ENCODE measurements at regions of chr5 and their contacts with region 1.

Region 1: GRCh38 chr5:10701567-10702039 is 59.4 kb downstream of the DAP start:
- DNase-seq: peak in 1 of 2 experiments; percentile 73
- H3K4me3 ChIP-seq: no peak overlapping the region
- H3K27ac ChIP-seq: no peak overlapping the region
- H3K4me1 ChIP-seq: peaks cover 4 to 17% (median 8%) of the 10 kb centered on the region in 4 experiments
- H3K27me3 ChIP-seq: no peaks in the 10 kb centered on the region
- CTCF ChIP-seq: peak; percentile 48 to 67 (median 55)
- EP300 ChIP-seq: no peak
- POLR2A ChIP-seq: no peak
- RAD21 ChIP-seq: peak; percentile 55 to 56

Region 2: DNA sequence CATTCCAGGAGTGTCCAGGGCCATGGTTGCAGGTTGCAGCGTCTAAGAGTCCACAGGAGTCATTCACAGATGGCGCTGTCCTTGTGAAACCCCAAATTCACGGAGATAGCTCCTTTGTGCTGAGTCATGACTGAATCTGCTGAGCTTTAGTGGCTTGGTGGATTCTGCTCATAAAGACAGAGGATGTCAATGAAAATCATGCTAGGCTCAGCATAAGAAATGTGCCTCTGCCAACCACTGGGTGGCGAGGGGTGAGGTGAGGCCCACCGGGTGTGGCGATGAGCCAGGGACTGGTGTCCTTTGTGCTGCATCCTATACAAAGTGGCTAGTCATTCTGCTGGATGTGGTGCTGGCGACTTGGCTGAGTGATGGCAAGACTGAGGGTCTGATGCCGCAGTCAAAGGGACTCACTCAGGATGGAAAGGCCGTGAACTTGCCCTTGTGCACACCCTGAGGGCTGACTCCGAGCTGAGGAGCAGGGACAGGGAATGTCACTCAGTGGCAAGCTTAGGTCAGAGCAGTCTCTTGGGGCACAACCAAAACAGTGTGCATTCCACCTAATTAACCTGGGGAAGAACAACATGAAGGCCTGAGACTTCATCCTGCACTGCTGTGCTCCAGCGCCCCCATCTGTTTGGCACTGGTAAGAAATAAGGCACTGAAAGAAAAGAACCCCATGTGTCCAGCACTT is 12.1 kb before region 1 on chr5:
- CTCF ChIA-PET with region 1: interaction called, 45 read pairs
- POLR2A ChIA-PET with region 1: interaction called, 6 read pairs
- DNase-seq: peak in 1 of 2 experiments; percentile 87
- H3K4me3 ChIP-seq: no peak overlapping the region
- H3K27ac ChIP-seq: peak overlapping the region; percentile 32; the same call in 1 of the 2 replicates
- H3K4me1 ChIP-seq: peaks cover 0 to 14% (median 5%) of the 10 kb centered on the region in 4 experiments; a peak in 6 of 7 replicates
- H3K27me3 ChIP-seq: no peaks in the 10 kb centered on the region
- CTCF ChIP-seq: peak; percentile 73 to 91 (median 83)
- EP300 ChIP-seq: no peak
- POLR2A ChIP-seq: no peak
- RAD21 ChIP-seq: peak; percentile 90 to 93

Region 3: DNA sequence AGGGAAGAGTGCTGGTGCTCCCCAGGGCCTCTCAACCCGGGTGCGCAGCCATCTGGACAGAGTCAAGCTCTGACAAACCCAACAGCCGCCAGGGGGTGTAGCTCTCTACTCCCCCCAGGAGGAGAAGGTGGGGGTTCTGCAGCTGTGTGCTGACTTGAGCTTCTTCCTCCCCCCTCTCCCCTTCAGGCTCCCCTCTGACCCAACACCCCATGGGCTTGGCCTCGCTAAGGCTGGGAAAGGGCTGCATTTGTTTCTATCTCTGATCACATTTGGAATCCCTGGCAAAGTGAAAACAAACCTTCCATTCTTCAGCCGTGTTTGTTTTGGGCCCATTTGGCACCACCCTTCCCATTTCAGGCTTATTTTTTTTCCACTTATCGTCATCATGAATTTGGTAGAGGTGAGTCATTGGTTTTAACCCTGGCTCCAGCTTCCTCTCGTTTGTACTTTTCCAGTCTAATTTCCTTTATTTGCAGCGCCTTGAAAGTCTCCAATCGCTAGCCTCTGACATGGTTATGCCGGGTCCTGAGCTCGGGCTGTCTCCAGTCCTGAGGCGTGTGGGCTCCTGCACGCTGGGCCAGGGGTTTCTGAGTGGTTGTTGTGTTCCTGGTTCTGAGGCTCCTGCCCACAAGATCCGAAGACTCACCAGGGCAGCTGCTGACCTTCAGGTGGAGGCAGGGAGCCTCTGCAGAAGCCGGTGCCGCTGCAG is 23.4 kb after region 1 on chr5:
- CTCF ChIA-PET with region 1: interaction called, 38 read pairs
- POLR2A ChIA-PET with region 1: no interaction called
- DNase-seq: no peak
- H3K4me3 ChIP-seq: no peak overlapping the region
- H3K27ac ChIP-seq: no peak overlapping the region
- H3K4me1 ChIP-seq: no peaks in the 10 kb centered on the region
- H3K27me3 ChIP-seq: no peaks in the 10 kb centered on the region
- CTCF ChIP-seq: peak in 1 of 3 experiments; percentile 6; a peak in 2 of 4 replicates
- EP300 ChIP-seq: no peak
- POLR2A ChIP-seq: no peak
- RAD21 ChIP-seq: no peak

Region 4: GRCh38 chr5:10775646-10776045 is 74.0 kb after region 1 on chr5:
- CTCF ChIA-PET with region 1: interaction called, 23 read pairs
- POLR2A ChIA-PET with region 1: no interaction called
- DNase-seq: no peak
- H3K4me3 ChIP-seq: no peak overlapping the region
- H3K27ac ChIP-seq: no peak overlapping the region
- H3K4me1 ChIP-seq: no peaks in the 10 kb centered on the region
- H3K27me3 ChIP-seq: no peaks in the 10 kb centered on the region; a peak in 1 of 7 replicates
- CTCF ChIP-seq: peak; percentile 47 to 51 (median 49)
- EP300 ChIP-seq: no peak
- POLR2A ChIP-seq: no peak
- RAD21 ChIP-seq: peak in 1 of 2 experiments; percentile 51; a peak in 2 of 4 replicates

Region 5: DNA sequence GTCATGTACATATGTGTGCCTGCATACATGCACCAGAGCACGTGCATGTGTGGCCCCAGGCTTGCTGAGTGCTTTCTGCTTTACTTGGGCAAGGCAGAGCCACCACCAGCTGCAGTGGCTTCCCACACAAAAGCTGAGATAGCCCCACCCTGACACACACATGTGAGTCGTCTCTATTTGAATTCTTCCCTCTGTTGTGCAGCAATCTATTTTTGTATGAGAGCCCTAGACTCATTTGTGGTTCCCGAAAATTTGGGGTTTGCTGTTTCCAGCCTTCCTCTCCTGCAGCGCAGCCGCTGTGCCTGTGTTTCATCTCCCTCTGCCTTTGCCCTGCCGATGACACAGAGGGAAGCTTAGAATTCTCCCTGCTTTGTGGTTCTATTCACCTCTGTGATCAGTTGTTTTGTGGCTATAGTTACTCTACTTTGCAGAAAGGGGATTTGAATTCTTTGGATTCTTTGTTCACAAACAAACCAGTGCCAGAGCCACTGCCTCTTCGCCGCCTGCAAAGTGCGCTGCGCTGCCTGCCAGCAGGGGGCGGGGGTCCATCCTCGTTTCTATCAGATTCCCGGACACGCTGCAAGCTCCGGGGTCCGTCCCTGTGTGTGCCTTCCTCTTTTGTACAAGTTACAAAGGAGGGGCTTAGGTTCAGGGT is 155.2 kb after region 1 on chr5:
- CTCF ChIA-PET with region 1: interaction called, 38 read pairs
- POLR2A ChIA-PET with region 1: no interaction called
- DNase-seq: peak; percentile 70 to 92
- H3K4me3 ChIP-seq: peak overlapping the region in 3 of 4 experiments; percentile 2 to 48 (median 20); a peak in 4 of 8 replicates
- H3K27ac ChIP-seq: no peak overlapping the region
- H3K4me1 ChIP-seq: peaks cover 4 to 16% (median 14%) of the 10 kb centered on the region in 4 experiments
- H3K27me3 ChIP-seq: peaks cover 0 to 10% (median 6%) of the 10 kb centered on the region in 4 experiments; a peak in 3 of 7 replicates
- CTCF ChIP-seq: peak; percentile 76 to 91 (median 86)
- EP300 ChIP-seq: 0 out of 3 replicates have a peak, but pooled peaks of 1 of the 2 experiments have one; percentile 55
- POLR2A ChIP-seq: no peak
- RAD21 ChIP-seq: peak; percentile 50 to 60; a peak in 3 of 4 replicates